Activated T-helper 1 cell treated with anti-CD3 and anti-CD28 coated beads, Interleukin-12 subunit alpha, Interleukin-12 subunit beta, Interleukin-2, Interleukin-4 antibody, amounts not matched to agents 30 ng/mL and 10 ng/mL and 1 ng/mL, durations not matched to agents 14 hours and 24 hours and 36 hours (primary cell): ENCODE measurements at regions of chr5 and their contacts with region 1.

Region 1: GRCh38 chr5:1799602-1800471 is at the start of gene MRPL36:
- DNase-seq: peak; percentile 84
- H3K4me3 Mint-ChIP-seq: peak within 1 kb of the TSS; percentile 98
- H3K27ac Mint-ChIP-seq: peak within 1 kb of the TSS; percentile 96
- H3K4me1 Mint-ChIP-seq: peaks cover 62% of the 10 kb centered on the region
- H3K27me3 Mint-ChIP-seq: no peaks in the 10 kb centered on the region
- total RNA-seq, gene MRPL36: 109 and 118 TPM in 2 replicates

Region 2: GRCh38 chr5:472656-473553 is 1326.9 kb before region 1 on chr5:
- intact Hi-C with region 1: loop called (anchors 10 kb)
- DNase-seq: peak; percentile 84
- H3K4me3 Mint-ChIP-seq: peak overlapping the region; percentile 83
- H3K27ac Mint-ChIP-seq: peak overlapping the region; percentile 74
- H3K4me1 Mint-ChIP-seq: peaks cover 6% of the 10 kb centered on the region
- H3K27me3 Mint-ChIP-seq: peaks cover 8% of the 10 kb centered on the region

Region 3: DNA sequence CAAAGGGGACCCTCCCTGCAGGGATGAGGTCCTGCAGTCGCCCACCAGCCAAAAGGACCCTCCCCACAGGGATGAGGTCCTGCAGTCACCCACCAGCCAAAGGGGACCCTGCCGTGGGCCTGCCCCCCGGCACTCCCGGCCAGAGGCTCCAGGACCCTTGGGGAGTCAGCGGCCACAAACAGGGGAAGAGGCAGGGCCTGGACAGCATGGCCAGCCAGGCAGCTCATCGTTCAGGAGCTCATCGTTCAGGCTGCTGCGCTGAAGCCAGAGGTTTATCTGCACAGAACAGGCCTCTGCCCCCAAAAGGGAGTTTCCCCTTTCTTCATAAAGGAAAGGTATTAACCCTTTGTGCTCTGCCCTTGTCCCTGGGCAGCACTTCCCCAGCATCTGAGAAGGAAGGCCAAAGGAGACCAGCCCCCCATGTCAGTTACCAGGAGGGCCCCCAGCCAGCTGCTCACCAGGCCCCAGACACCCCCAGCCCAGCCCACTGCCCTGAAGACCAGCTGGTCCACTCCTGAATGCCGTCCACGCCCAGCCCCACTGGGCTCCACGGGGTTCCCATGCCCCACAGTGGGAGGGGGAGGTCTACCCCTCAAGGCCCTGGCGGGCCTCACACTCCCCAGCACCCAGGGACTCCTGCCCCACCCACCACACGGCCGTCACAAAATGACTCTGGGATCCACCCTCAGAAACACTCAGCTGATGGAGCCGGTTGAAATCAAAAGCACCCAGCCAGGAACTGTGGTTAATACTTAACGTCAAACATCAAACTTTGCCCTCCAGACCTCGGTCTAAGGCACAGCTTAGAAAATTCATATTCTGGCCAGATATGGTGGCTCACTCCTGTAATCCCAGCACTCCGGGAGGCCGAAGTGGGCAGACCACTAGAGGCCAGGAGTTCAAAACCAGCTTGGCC is 694.2 kb before region 1 on chr5:
- intact Hi-C with region 1: loop called (anchors 10 kb)
- DNase-seq: peak; percentile 72
- H3K4me3 Mint-ChIP-seq: peak overlapping the region; percentile 80
- H3K27ac Mint-ChIP-seq: peak overlapping the region; percentile 90
- H3K4me1 Mint-ChIP-seq: peaks cover 54% of the 10 kb centered on the region
- H3K27me3 Mint-ChIP-seq: no peaks in the 10 kb centered on the region

Region 4: GRCh38 chr5:1522908-1523770 is 276.7 kb before region 1 on chr5:
- intact Hi-C with region 1: no loop called
- DNase-seq: no peak
- H3K4me3 Mint-ChIP-seq: peak overlapping the region; percentile 91
- H3K27ac Mint-ChIP-seq: peak overlapping the region; percentile 34
- H3K4me1 Mint-ChIP-seq: peaks cover 15% of the 10 kb centered on the region
- H3K27me3 Mint-ChIP-seq: no peaks in the 10 kb centered on the region

Region 5: DNA sequence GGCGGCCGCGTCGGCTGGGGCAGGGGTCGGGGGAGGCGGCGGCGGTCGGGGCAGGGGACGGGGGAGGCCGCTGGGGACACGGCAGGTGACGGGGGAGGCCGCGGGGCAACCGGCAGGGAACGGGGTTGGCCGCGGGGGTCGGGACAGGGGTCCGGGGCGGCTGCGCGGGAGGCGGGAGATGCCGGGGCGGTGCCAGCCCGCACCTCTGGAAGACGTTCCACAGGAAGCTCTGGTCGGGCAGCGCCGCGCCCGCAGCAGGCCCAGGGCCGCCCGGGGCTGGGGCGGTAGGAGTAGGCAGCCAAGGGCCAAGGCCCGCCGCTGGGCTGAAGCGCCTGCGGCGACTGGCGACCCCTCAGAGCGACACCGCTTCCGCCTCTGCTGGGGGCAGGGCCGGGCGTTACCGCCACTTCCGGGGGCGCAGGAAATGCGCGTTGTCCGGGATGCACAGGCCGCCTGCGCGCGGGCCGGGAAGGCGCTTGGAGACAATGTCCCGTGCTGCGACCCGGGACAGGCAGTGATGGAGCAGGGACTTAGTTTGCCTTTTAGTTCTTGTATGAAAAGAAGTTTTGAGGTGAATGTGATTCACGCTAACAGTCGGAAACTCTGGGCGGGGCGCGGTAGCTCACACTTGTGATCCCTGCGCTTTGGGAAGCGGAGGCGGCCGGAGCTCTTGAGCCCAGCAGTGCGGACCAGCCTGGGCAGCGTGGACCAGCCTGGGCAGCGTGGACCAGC is 166.1 kb before region 1 on chr5:
- intact Hi-C with region 1: loop called (anchors 10 kb)
- DNase-seq: peak; percentile 78
- H3K4me3 Mint-ChIP-seq: peak overlapping the region; percentile 94
- H3K27ac Mint-ChIP-seq: peak overlapping the region; percentile 89
- H3K4me1 Mint-ChIP-seq: peaks cover 19% of the 10 kb centered on the region
- H3K27me3 Mint-ChIP-seq: peaks cover 3% of the 10 kb centered on the region

Region 6: DNA sequence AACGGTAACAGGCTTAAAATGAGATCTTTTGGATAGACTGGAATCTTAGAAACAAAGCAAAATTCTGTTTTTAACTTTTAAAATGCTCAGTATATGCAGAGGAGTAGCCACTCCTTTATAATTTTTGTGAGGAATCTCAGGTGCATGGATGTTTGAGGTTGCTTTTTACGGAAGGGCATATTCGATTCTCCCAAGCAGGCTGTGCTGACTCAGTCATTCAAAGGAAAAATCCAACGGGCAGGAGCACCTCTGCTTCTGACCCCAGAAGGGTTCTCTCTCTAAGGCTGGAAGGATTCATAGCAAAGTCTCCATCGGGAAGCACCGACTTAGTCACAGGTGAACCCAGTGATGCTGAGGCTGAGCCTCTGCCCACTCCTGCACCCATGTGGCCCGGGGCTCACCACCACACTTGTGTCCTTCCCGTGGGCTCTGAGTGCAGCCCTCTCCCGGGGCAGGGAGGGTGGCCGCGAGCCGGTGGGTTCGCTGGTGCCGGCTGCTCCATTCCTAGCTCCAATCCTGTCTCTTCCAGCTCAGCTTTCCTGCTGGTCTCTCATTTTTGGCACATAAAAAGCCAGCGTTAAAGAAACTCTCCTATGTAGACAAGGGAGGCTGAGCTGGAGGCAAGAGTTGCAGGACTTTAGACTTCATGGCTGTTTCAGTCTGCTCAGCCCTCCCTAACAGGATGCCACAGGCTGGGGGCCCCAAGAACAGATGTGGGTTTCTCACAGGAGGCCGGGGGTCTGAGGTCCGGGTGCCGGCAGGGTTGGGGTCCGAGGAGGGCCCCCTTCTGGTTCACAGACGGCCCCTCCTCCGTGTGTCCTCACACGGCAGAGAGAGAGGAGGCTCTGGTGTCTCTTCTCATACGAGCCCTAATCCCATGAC is 140.5 kb before region 1 on chr5:
- intact Hi-C with region 1: no loop called
- DNase-seq: no peak
- H3K4me3 Mint-ChIP-seq: no peak overlapping the region
- H3K27ac Mint-ChIP-seq: no peak overlapping the region
- H3K4me1 Mint-ChIP-seq: no peaks in the 10 kb centered on the region
- H3K27me3 Mint-ChIP-seq: peaks cover 5% of the 10 kb centered on the region

Region 7: DNA sequence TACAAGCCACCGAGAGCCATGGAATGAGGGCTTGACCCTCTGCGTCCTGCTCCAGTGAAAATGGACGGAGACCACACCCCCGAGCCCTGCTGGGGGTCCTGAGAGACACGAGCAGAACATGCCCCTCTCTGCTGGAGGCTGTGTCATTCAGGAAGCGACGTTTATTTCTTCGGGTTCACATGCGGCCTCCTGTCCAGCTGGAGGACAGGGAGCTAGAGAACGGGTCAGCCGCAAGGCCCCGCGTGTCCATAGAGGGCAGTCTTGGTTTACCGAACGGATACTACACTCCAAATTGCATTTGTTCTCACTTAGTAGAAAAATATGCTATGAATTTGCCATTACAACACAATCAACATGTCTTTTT is 36.3 kb before region 1 on chr5:
- intact Hi-C with region 1: loop called (anchors 1 kb)
- DNase-seq: peak; percentile 19
- H3K4me3 Mint-ChIP-seq: no peak overlapping the region
- H3K27ac Mint-ChIP-seq: no peak overlapping the region
- H3K4me1 Mint-ChIP-seq: no peaks in the 10 kb centered on the region
- H3K27me3 Mint-ChIP-seq: peaks cover 4% of the 10 kb centered on the region